ENCODE measurements at regions of chr11 and their contacts with region 1.

Region 1: GRCh38 chr11:77530879-77531278 is 57.0 kb upstream of the PAK1 start:
- DNase-seq: no peak
- ATAC-seq: no peak

Region 2: DNA sequence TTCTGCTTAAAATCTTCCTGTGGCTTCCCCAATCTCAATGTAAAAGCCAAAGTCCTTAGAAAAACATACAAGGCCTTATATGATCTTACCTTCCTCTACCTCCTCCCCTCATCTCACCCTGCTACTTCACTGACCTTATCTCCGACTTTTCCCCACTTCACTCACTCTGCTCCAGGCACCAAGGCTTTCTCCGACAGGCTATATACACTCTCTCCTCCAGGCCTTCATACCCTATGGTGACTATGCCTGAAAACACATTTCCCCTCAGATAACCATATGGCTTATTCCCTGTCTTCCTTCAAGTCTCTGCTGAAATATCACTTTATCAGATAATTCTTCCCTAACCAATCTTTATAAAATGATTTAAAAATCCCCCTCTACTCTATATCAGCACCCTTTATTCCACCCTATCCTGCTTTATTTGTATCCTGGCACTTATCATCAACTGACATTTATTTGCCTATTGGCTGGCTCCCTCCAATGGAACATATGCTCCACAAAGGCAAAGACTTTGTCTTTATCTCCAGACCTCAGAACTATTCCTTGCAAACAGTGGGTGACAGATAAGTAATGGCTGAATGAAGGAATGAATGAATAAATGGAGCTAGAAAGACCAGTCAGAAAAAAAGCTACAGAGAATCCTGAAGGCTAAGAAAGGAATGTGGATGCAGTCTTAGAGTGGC is 109.7 kb before region 1 on chr11:
- intact Hi-C with region 1: no loop called
- DNase-seq: no peak
- ATAC-seq: no peak

Region 3: DNA sequence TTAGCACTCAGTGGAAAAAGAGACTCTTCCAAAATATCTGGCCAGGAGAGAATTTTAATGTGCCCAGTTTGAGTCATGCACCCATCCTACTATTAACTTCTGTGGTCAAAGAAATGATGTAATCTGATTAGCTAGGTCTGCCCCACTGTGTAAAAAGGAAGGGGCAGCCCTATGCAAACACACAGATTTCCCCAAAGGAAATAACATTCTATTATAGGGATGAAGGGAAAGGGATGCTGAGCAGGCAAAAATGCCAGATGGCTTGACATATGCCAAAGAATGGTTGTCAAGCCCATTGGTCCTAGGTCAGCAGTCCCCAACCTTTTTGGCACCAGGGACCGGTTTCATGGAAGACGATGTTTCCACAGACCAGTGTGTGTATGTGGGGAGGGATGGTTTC is 13.7 kb before region 1 on chr11:
- intact Hi-C with region 1: loop called (anchors 2 kb)
- DNase-seq: no peak
- ATAC-seq: no peak

Region 4: GRCh38 chr11:78000193-78000592 is 469.3 kb after region 1 on chr11:
- intact Hi-C with region 1: no loop called
- DNase-seq: no peak
- ATAC-seq: peak; percentile 64